ENCODE measurements at regions of chr3 and their contacts with region 1.

Region 1: GRCh38 chr3:52444860-52445793 is at the start of gene SEMA3G:
- DNase-seq: peak; percentile 84
- H3K4me3 ChIP-seq: no peak within 1 kb of the TSS
- H3K27ac ChIP-seq: no peak within 1 kb of the TSS
- H3K4me1 ChIP-seq: peaks cover 0 to 5% of the 10 kb centered on the region in 2 experiments; a peak in 1 of 4 replicates
- H3K27me3 ChIP-seq: no peaks in the 10 kb centered on the region
- CTCF ChIP-seq: peak; percentile 40; the same call in 1 of the 2 replicates
- EP300 ChIP-seq: no peak
- RAD21 ChIP-seq: no peak
- polyA plus RNA-seq, gene SEMA3G: 0.10 and 0.13 TPM in 2 replicates

Region 2: GRCh38 chr3:52291508-52292181 is 153.5 kb before region 1 on chr3:
- CTCF ChIA-PET with region 1: interaction called, 11 read pairs
- POLR2A ChIA-PET with region 1: no interaction called
- DNase-seq: peak; percentile 80
- H3K4me3 ChIP-seq: no peak overlapping the region
- H3K27ac ChIP-seq: no peak overlapping the region
- H3K4me1 ChIP-seq: peaks cover 0 to 38% of the 10 kb centered on the region in 2 experiments; a peak in 2 of 4 replicates
- H3K27me3 ChIP-seq: no peaks in the 10 kb centered on the region
- CTCF ChIP-seq: peak; percentile 71
- EP300 ChIP-seq: no peak
- RAD21 ChIP-seq: peak; percentile 93

Region 3: DNA sequence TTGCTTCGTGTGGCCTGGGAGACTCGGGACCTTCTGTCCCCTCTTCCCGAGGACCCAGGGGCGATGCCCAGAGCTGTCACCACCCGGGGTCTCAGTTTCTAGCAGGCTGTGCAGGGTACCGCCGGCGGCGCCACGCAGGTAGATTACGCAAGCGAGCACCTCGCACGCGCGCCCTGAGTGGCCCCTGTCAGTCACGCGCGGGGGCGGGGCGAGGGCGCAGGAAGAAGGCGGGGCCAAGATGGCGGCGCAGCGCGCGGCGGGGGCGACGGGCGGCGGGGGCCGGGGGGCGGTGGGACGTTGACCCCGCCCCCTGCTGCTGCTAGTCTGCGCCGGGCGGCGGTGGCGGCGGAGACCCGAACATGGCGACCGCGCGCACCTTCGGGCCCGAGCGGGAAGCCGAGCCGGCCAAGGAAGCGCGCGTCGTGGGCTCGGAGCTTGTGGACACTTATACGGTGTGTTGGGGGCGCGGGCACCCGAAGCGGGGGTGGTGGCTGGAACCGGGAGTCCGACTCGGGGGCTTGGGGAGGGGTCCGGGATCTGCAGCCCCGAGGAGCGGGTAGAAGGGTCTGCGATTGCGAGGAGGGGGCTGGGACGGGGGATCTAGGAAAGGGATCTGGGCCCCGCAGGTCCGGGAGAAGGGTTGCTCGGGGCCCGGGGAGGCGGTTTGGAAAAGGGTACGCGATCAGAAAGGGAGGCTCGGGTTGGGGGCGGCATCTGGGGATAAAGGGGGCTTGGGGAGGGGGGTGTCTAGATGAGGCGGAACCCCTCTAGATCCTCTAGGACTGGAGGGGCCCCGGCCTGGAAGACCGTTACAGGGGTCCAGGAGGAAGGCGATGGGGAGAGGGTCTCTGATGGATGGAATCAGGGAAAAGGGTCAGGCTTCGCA is 10.4 kb after region 1 on chr3 and contains the start of gene NISCH:
- CTCF ChIA-PET with region 1: interaction called, 32 read pairs
- POLR2A ChIA-PET with region 1: no interaction called
- DNase-seq: peak; percentile 99
- H3K4me3 ChIP-seq: peak within 1 kb of the TSS; percentile 89
- H3K27ac ChIP-seq: peak within 1 kb of the TSS; percentile 52 to 81; a peak in 3 of 4 replicates
- H3K4me1 ChIP-seq: peaks cover 8 to 26% of the 10 kb centered on the region in 2 experiments
- H3K27me3 ChIP-seq: no peaks in the 10 kb centered on the region
- CTCF ChIP-seq: no peak
- EP300 ChIP-seq: no peak
- RAD21 ChIP-seq: no peak
- polyA plus RNA-seq, gene NISCH: 77.5 and 95.1 TPM in 2 replicates

Region 4: DNA sequence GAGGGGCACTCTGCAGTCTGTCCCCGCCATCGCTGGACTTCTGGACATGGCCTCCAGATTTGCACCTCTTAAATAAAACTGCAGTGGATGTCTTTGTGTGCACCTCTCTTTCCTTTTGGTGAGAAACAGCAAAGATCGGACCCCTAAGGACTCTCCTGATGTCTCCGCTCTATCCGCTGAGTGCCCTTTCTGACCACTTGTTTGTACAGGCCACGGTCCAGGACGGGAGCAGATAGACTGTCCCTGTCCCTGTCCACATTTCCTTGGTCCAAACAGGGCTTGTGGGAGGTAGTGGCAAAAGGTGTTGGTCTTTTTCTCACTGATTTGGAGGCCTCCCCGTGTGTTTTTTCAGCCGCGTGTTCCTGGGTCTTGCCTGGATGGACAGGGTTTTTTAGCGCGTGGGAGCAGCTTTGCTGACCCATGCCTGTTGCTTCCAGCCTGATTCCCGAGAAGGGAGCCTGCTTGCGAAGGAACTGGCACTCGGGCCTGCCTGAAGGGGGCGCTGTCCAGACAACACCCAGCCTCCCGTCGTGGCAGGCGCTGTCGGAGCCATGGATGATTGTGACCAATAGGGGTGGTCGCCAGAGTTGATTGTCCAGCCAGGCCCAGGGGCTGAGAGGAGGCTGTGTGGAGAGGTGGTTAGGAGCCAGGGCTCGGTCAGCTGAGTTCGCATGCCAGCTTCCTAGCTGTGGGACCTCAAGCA is 36.8 kb after region 1 on chr3:
- CTCF ChIA-PET with region 1: interaction called, 13 read pairs
- POLR2A ChIA-PET with region 1: no interaction called
- DNase-seq: peak; percentile 72
- H3K4me3 ChIP-seq: no peak overlapping the region
- H3K27ac ChIP-seq: peak overlapping the region in 1 of 2 experiments; percentile 83; a peak in 2 of 4 replicates
- H3K4me1 ChIP-seq: peaks cover 0 to 51% of the 10 kb centered on the region in 2 experiments; a peak in 1 of 4 replicates
- H3K27me3 ChIP-seq: no peaks in the 10 kb centered on the region
- CTCF ChIP-seq: peak; percentile 57
- EP300 ChIP-seq: no peak
- RAD21 ChIP-seq: no peak